ENCODE measurements at regions of chr1 and their contacts with region 1.

Region 1: DNA sequence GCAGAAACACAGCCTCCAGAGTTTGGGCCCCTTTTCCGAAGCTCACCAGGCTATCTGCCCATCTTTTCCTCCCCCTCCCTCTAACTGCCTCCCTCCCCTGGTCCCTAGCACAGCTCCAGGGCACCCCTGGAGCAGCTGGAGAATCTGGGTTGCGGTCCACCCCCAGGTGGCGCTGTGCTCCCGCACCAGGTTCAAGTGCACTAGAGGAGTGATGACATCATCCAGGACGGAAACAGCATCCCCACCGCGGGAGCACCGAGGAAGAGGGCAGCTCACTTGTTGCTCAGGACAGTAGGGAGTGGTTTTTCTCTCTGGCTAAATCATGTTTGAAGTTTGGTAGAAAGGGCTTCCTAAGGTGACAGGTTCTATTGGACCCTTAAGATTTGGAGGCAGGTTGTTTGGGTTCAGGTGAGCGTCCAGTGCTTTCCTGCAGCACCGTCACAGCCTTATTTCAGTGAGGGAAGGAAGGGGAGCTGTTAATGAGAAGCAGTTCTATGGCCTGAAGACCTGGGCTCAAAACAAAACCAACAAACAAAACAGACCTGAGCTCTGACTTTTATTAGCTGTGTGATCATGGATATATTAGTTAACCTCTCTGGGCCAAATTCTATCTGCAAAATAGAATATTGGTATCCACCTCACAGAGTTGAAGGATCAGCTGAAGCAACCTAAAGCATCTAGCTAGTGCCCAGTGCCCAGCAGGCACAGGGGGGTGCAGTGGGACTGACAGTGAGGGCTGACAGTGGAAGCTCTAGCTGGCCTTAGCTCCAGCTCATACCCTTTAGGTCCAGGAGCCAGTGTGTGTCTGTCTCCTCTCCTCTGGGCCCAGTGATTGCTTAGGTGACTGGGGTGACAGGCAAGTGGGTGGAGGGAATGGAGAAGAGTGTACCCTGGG is 7.5 kb downstream of the SHISA4 start:
- DNase-seq: peak; percentile 96

Region 2: DNA sequence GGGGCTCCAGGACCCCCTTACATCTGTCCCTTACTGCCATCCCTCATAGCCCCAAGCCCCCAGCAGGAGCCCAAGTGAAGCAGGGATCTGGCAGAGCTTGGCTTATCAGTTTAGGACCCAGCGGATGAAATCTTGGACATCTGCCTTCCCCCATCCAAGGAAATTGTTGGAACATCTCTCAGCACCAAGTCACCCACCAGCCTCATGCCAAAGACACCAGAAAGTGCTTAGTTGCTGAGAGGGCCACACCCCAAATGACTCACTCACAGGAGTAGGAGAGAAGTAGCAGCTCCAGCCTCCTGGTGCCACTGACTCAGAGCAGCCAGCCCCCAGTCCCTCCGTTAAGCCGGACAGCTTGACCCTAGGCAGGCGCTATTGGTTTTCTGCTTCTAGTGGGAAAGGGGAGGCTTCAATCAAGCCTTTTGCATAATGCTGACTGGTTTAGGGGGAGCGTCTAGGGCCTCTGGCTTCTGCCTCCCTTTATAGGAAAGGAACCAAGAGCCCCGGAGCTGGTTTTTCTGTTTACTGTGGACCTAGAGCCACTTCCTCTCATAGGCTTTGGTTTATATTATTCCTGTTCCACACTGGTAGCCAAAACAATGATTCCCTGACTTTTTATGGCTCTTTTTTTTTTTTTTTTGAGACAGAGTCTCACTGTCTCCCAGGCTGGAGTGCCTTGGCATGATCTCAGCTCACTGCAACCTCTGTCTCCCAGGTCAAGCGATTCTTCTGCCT is 181.5 kb before region 1 on chr1:
- CTCF ChIA-PET with region 1: no interaction called
- POLR2A ChIA-PET with region 1: no interaction called
- DNase-seq: peak; percentile 59

Region 3: DNA sequence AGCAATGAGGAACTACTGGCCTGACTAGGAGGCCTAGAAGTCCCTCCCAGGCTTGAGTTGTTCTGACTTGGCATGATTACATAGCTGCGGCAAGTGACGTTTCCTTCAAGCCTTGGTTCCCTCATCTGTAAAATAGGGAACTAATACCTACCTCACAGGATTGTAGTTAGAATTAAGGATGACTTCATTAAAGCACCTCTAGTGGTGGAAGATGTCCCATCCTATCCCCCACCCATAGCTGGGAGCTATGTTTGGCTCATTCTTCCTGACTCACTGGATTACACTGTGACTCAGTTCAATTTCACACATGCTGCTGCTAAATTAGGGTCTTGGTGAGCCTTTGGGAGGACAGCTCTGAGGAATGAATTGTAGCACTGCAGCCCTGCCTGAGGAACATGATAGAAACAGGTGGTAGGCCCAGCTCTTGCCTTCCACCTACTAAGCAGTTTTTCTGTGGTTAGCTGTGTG is 13.5 kb before region 1 on chr1:
- CTCF ChIA-PET with region 1: interaction called, 22 read pairs
- POLR2A ChIA-PET with region 1: interaction called, 6 read pairs
- DNase-seq: no peak

Region 4: DNA sequence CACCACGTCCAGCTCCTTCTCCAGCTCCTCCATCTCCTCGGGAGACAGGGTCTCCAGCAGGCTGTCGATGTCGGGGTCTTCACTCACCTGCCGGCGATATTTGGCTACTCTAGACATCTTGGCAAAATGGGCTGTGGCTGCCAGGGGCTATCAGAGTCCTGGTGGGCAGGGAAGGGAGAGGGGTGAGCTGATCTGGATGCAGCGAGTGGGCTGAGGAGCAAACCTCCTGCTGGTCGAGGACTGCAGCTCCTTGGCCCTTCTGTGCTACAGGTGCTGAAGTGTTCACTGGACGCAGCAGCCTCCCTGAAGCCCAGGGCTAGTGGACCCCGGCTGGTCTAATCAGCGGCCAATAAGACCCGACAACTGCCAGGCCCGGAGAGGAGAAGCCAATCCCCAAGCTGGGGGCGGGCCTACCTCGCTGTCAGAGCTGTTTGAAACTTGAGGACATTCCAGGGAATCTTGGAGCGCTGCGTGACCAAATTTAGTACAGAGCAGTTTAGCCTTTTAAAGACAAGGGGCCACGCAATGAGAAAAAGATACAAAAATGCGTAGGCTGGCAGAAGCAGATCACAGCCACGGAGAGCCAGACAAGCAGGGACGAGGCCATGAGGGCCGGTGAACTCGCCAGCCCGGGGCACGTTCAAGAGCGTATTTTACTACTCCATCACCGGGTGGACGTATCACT is 50.2 kb after region 1 on chr1 and contains the start of gene LMOD1:
- CTCF ChIA-PET with region 1: interaction called, 17 read pairs
- POLR2A ChIA-PET with region 1: interaction called, 9 read pairs
- DNase-seq: peak; percentile 87

Region 5: GRCh38 chr1:201970334-201971159 is 74.4 kb after region 1 on chr1:
- CTCF ChIA-PET with region 1: interaction called, 76 read pairs
- POLR2A ChIA-PET with region 1: interaction called, 4 read pairs
- DNase-seq: no peak

Measured in HEK293T (cell line).